ENCODE measurements at regions of chr3 and their contacts with region 1.

Region 1: DNA sequence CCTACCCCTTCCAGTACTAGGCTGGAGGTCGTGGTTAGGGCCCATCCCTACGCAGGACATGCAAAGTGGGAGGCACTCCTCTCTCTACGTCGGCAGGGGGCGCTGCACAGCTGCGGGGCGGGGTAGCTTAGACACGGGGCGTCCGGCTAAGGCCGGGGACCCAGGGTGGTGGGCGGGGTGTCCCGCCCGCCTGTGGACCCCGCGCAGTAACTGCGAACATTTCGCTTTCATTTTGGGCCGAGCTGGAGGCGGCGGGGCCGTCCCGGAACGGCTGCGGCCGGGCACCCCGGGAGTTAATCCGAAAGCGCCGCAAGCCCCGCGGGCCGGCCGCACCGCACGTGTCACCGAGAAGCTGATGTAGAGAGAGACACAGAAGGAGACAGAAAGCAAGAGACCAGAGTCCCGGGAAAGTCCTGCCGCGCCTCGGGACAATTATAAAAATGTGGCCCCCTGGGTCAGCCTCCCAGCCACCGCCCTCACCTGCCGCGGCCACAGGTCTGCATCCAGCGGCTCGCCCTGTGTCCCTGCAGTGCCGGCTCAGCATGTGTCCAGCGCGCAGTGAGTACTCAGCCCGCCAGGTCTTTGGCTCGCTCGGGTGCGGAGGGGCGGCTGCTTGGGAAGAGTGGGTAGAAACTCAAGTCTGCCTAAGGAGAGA is at the start of gene IL12A:
- DNase-seq: peak; percentile 57 to 92
- H3K4me3 ChIP-seq: peak within 1 kb of the TSS; percentile 46 to 73 (median 56)
- H3K27ac ChIP-seq: no peak within 1 kb of the TSS
- H3K4me1 ChIP-seq: peaks cover 0 to 5% (median under 1%) of the 10 kb centered on the region in 4 experiments
- H3K27me3 ChIP-seq: peaks cover 0 to 3% (median 2%) of the 10 kb centered on the region in 4 experiments; a peak in 3 of 7 replicates
- CTCF ChIP-seq: peak; percentile 81 to 98 (median 88)
- EP300 ChIP-seq: no peak
- POLR2A ChIP-seq: no peak
- RAD21 ChIP-seq: peak; percentile 59 to 69
- total RNA-seq, gene IL12A: 0.41 and 0.82 TPM in 2 replicates

Region 2: GRCh38 chr3:159813822-159814523 is 174.8 kb before region 1 on chr3:
- CTCF ChIA-PET with region 1: interaction called, 38 read pairs
- POLR2A ChIA-PET with region 1: no interaction called
- DNase-seq: peak in 1 of 2 experiments; percentile 31
- H3K4me3 ChIP-seq: no peak overlapping the region
- H3K27ac ChIP-seq: no peak overlapping the region
- H3K4me1 ChIP-seq: peaks cover 2 to 6% (median 3%) of the 10 kb centered on the region in 4 experiments; a peak in 5 of 7 replicates
- H3K27me3 ChIP-seq: no peaks in the 10 kb centered on the region
- CTCF ChIP-seq: no peak
- EP300 ChIP-seq: no peak
- POLR2A ChIP-seq: no peak
- RAD21 ChIP-seq: no peak

Region 3: DNA sequence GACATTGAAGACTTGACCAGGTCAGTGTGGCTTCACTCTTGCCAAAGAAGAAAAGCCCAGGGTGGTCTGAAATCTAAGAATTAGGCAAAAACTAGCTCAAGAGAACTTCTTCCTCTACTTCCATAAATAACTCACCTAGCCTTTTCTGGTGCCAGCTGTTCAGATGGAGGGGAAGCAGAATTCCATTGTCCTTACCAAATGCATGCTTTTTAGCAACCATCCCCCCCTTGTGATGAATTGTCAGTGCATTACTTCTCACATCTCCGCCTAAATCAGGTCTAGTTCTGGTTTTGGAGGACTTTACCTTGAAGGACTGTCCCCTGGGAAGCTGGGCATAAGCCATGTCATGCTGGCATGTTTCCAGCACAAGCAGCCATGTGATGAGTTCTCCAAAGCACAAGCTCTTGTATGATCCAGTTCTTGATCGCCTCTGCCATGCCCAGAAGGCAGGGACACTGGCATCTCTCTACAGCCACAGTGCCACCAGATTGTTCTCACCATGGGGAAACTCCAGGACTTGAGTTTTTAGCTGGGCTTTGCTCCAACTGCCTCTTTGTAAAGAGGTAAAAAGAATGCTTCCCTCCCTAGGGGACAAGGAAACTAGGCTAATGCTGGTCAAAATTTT is 96.5 kb before region 1 on chr3:
- CTCF ChIA-PET with region 1: interaction called, 64 read pairs
- POLR2A ChIA-PET with region 1: no interaction called
- DNase-seq: no peak
- H3K4me3 ChIP-seq: no peak overlapping the region
- H3K27ac ChIP-seq: no peak overlapping the region
- H3K4me1 ChIP-seq: no peaks in the 10 kb centered on the region
- H3K27me3 ChIP-seq: no peaks in the 10 kb centered on the region
- CTCF ChIP-seq: no peak
- EP300 ChIP-seq: no peak
- POLR2A ChIP-seq: no peak
- RAD21 ChIP-seq: no peak

Region 4: GRCh38 chr3:159902546-159903314 is 86.0 kb before region 1 on chr3:
- CTCF ChIA-PET with region 1: interaction called, 21 read pairs
- POLR2A ChIA-PET with region 1: no interaction called
- DNase-seq: no peak
- H3K4me3 ChIP-seq: no peak overlapping the region
- H3K27ac ChIP-seq: no peak overlapping the region
- H3K4me1 ChIP-seq: no peaks in the 10 kb centered on the region; a peak in 1 of 7 replicates
- H3K27me3 ChIP-seq: no peaks in the 10 kb centered on the region
- CTCF ChIP-seq: no peak
- EP300 ChIP-seq: no peak
- POLR2A ChIP-seq: no peak
- RAD21 ChIP-seq: no peak

Region 5: GRCh38 chr3:159950156-159950898 is 38.4 kb before region 1 on chr3:
- CTCF ChIA-PET with region 1: interaction called, 10 read pairs
- POLR2A ChIA-PET with region 1: no interaction called
- DNase-seq: no peak
- H3K4me3 ChIP-seq: no peak overlapping the region
- H3K27ac ChIP-seq: no peak overlapping the region
- H3K4me1 ChIP-seq: no peaks in the 10 kb centered on the region
- H3K27me3 ChIP-seq: no peaks in the 10 kb centered on the region
- CTCF ChIP-seq: no peak
- EP300 ChIP-seq: no peak
- POLR2A ChIP-seq: no peak
- RAD21 ChIP-seq: no peak

Region 6: GRCh38 chr3:159978353-159978752 is 10.4 kb before region 1 on chr3:
- CTCF ChIA-PET with region 1: interaction called, 18 read pairs
- POLR2A ChIA-PET with region 1: no interaction called
- DNase-seq: no peak
- H3K4me3 ChIP-seq: no peak overlapping the region
- H3K27ac ChIP-seq: no peak overlapping the region
- H3K4me1 ChIP-seq: no peaks in the 10 kb centered on the region
- H3K27me3 ChIP-seq: no peaks in the 10 kb centered on the region
- CTCF ChIP-seq: no peak
- EP300 ChIP-seq: no peak
- POLR2A ChIP-seq: no peak
- RAD21 ChIP-seq: no peak

Region 7: DNA sequence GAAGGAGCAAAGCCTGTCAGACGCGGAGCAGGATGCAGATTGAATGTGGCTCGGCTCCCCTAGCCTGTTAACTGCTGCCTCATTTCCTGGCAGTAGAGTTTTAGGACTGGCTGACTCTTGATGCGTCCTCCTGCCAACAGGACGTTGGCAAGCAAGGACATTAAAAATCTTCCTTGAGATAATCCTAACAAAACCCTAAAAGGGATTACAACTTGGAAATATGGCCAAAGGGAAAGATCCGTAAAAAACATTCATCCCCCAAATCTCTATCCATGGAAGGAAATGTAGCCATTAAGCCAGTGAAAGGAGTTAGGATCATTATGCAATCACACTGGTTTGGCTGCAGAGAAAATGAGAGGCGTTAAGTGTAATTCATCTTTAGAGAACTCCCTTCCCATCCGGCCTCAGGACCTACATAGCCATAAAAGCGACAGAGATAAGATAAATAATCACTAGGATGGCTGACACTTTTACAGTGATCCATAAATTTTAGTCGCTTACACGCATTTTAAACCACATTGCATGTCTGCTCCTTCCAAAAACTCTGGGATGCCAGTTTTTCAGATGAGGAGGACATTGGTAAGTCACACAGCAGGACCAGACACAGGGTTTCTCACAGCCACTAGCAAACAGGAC is 192.0 kb after region 1 on chr3:
- CTCF ChIA-PET with region 1: no interaction called
- POLR2A ChIA-PET with region 1: no interaction called
- DNase-seq: peak in 1 of 2 experiments; percentile 11
- H3K4me3 ChIP-seq: no peak overlapping the region
- H3K27ac ChIP-seq: no peak overlapping the region
- H3K4me1 ChIP-seq: no peaks in the 10 kb centered on the region
- H3K27me3 ChIP-seq: no peaks in the 10 kb centered on the region
- CTCF ChIP-seq: no peak
- EP300 ChIP-seq: no peak
- POLR2A ChIP-seq: no peak
- RAD21 ChIP-seq: no peak